RWPE1 (cell line): ENCODE measurements at regions of chr9 and their contacts with region 1.

Region 1: GRCh38 chr9:68581696-68582095 is 41.0 kb upstream of the TMEM252 start:
- DNase-seq: no peak
- H3K27ac ChIP-seq: no peak overlapping the region
- CTCF ChIP-seq: no peak

Region 2: DNA sequence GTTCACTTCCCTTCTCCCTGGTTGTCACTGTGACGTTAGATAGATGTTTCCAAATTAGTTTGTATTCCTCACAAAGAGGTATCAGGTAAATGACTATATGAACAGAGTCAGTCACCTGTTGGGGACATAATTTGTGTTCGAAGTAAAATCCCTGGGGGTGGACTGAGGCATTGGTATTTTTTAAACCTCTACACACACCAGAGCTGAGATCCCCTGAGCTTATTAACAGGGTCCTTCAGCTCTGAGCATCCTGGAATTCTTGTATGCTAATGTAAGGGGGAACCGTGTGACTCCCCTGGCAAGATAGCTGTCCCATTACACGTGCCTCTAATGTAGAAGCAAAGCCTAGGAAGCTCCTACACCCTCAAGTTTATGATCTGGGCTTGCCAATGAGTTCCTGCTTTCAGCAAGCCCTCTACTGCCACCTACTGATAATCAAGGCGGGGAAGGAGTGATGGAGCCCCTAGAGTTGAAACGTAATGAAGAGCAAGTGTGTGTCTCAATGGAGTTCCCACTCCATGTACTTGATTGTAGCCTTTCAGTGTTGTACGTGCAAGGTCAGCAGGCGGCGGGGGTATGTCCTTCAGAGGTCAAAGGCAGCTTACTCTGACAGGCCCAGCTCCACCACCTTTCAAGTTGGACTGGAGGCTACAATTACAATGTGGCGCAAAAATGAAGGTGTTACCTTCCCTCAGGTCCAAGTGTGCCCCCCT is 417.9 kb after region 1 on chr9:
- CTCF ChIA-PET with region 1: interaction called, 18 read pairs
- POLR2A ChIA-PET with region 1: no interaction called
- DNase-seq: peak; percentile 76
- H3K27ac ChIP-seq: no peak overlapping the region
- CTCF ChIP-seq: peak; percentile 65